ENCODE measurements at regions of chr12 and their contacts with region 1.

Region 1: DNA sequence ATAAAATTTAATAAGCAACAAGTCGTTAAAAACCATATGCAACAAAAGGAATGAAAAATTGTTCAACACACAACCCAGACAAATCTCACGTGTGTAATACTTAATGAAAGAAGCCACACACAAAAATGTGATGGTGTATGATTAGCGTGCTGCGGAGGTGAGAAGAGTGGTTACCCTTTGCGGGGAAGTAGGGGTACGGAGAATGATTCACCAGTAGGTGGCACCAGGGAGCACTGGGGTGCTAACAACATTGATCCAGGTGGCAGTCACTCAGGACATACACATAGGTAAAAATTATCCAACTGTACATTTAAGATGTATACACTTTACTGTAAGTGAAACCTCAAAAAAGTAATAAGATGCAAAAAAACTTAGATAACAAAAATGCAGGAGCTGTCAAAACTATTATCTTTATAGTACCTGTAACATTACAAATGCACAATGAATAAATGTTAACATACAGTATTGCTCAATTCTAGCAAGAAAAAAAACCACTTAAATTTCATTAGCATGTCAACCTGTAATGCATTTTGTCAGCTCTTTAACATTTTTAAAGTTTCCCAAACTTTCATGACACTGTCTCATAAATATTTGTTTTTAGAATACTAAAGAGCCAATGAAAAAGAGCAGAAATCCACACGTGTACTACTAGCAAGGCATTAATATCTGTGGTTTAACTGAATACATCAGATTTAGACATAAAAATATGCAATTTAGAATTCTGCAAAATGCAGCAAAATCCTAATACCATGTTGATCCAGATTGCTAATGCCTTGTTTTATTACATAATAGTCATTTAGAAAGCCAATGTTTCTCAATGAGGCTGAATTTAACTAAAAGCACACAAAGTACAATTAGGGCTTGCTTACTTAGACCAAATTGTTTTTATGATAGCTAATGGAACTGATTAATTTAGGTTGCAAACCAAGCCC is 46.7 kb downstream of the TMCC3 start:
- DNase-seq: peak; percentile 13 to 80 (median 50)
- ATAC-seq: peak; percentile 59
- H3K4me3 ChIP-seq: no peak overlapping the region
- H3K4me3 Mint-ChIP-seq: no peak overlapping the region
- H3K27ac ChIP-seq: no peak overlapping the region
- H3K27ac Mint-ChIP-seq: no peak overlapping the region
- H3K4me1 ChIP-seq: no peaks in the 10 kb centered on the region
- H3K4me1 Mint-ChIP-seq: no peaks in the 10 kb centered on the region
- H3K27me3 ChIP-seq: peaks cover 0 to 2% of the 10 kb centered on the region in 2 experiments
- H3K27me3 Mint-ChIP-seq: peaks cover 13% of the 10 kb centered on the region
- CTCF ChIP-seq: peak; percentile 65

Region 2: GRCh38 chr12:94401326-94401725 is 202.4 kb before region 1 on chr12:
- CTCF ChIA-PET with region 1: no interaction called
- POLR2A ChIA-PET with region 1: no interaction called
- intact Hi-C with region 1: no loop called
- DNase-seq: no peak
- ATAC-seq: no peak
- H3K4me3 ChIP-seq: no peak overlapping the region
- H3K4me3 Mint-ChIP-seq: no peak overlapping the region
- H3K27ac ChIP-seq: no peak overlapping the region
- H3K27ac Mint-ChIP-seq: no peak overlapping the region
- H3K4me1 ChIP-seq: no peaks in the 10 kb centered on the region
- H3K4me1 Mint-ChIP-seq: peaks cover 9% of the 10 kb centered on the region
- H3K27me3 ChIP-seq: no peaks in the 10 kb centered on the region
- H3K27me3 Mint-ChIP-seq: no peaks in the 10 kb centered on the region
- CTCF ChIP-seq: no peak

Region 3: GRCh38 chr12:94525951-94526350 is 77.7 kb before region 1 on chr12:
- CTCF ChIA-PET with region 1: no interaction called
- POLR2A ChIA-PET with region 1: no interaction called
- intact Hi-C with region 1: no loop called
- DNase-seq: no peak
- ATAC-seq: no peak
- H3K4me3 ChIP-seq: no peak overlapping the region
- H3K4me3 Mint-ChIP-seq: no peak overlapping the region
- H3K27ac ChIP-seq: no peak overlapping the region
- H3K27ac Mint-ChIP-seq: no peak overlapping the region
- H3K4me1 ChIP-seq: no peaks in the 10 kb centered on the region
- H3K4me1 Mint-ChIP-seq: no peaks in the 10 kb centered on the region
- H3K27me3 ChIP-seq: no peaks in the 10 kb centered on the region
- H3K27me3 Mint-ChIP-seq: peaks cover 5% of the 10 kb centered on the region
- CTCF ChIP-seq: no peak

Region 4: DNA sequence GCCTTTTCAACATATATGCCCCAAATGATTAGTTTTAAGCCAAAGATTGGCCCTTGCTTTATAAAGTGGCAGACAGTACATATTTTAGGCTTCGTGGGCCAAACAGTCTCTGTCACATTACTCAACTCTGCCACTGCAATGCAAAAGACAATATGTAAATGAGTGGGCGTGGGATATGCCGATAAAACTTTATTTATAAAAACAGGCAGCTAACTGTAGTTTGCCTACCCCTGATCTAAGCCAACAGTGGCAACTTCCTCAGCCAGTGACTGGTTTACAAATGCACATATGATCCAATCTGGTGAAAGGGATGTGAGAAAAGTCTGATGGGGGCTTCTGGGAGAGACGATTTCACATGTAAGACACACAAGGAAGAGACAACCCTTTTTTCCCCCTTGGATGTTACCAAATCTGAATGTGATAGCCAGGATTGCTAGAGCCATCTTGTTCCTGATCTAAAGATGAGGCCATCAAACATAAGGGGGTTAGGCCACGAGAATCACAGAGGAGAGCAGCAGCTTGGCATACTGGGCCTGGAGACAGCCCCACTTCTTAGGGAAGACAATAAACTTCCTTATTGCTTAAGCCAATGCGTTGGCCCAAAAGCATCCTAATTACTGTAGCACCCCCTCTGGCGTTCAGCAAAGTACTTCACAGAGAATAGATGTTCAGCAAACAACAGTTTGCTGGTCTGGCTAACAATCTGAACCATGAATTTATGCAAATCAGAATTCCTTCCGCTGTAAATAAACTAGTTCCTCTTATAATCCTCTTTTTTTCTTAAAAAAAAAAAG is 121.9 kb after region 1 on chr12:
- CTCF ChIA-PET with region 1: no interaction called
- POLR2A ChIA-PET with region 1: no interaction called
- intact Hi-C with region 1: loop called (anchors 5 to 10 kb)
- DNase-seq: peak in 2 of 9 experiments; percentile 52 to 59
- ATAC-seq: no peak
- H3K4me3 ChIP-seq: no peak overlapping the region
- H3K4me3 Mint-ChIP-seq: no peak overlapping the region
- H3K27ac ChIP-seq: no peak overlapping the region
- H3K27ac Mint-ChIP-seq: no peak overlapping the region
- H3K4me1 ChIP-seq: no peaks in the 10 kb centered on the region
- H3K4me1 Mint-ChIP-seq: no peaks in the 10 kb centered on the region
- H3K27me3 ChIP-seq: no peaks in the 10 kb centered on the region
- H3K27me3 Mint-ChIP-seq: peaks cover 12% of the 10 kb centered on the region
- CTCF ChIP-seq: no peak

Region 5: GRCh38 chr12:94762259-94762942 is 158.7 kb after region 1 on chr12:
- CTCF ChIA-PET with region 1: no interaction called
- POLR2A ChIA-PET with region 1: no interaction called
- intact Hi-C with region 1: loop called (anchors 1 to 10 kb)
- DNase-seq: no peak
- ATAC-seq: no peak
- H3K4me3 ChIP-seq: no peak overlapping the region
- H3K4me3 Mint-ChIP-seq: no peak overlapping the region
- H3K27ac ChIP-seq: no peak overlapping the region
- H3K27ac Mint-ChIP-seq: no peak overlapping the region
- H3K4me1 ChIP-seq: no peaks in the 10 kb centered on the region
- H3K4me1 Mint-ChIP-seq: peaks cover 2% of the 10 kb centered on the region
- H3K27me3 ChIP-seq: peaks cover 0 to 2% of the 10 kb centered on the region in 2 experiments
- H3K27me3 Mint-ChIP-seq: peaks cover 6% of the 10 kb centered on the region
- CTCF ChIP-seq: no peak

Region 6: GRCh38 chr12:94980577-94980976 is 376.9 kb after region 1 on chr12:
- CTCF ChIA-PET with region 1: no interaction called
- POLR2A ChIA-PET with region 1: no interaction called
- intact Hi-C with region 1: loop called in 1 of 2 experiments (anchors 5 kb)
- DNase-seq: peak in 2 of 9 experiments; percentile 38 to 55
- ATAC-seq: peak; percentile 61
- H3K4me3 ChIP-seq: no peak overlapping the region
- H3K4me3 Mint-ChIP-seq: no peak overlapping the region
- H3K27ac ChIP-seq: no peak overlapping the region
- H3K27ac Mint-ChIP-seq: peak overlapping the region; percentile 45
- H3K4me1 ChIP-seq: peaks cover 17% of the 10 kb centered on the region
- H3K4me1 Mint-ChIP-seq: peaks cover 57% of the 10 kb centered on the region
- H3K27me3 ChIP-seq: no peaks in the 10 kb centered on the region
- H3K27me3 Mint-ChIP-seq: no peaks in the 10 kb centered on the region
- CTCF ChIP-seq: peak; percentile 26